OCI-LY7 (cell line): ENCODE measurements at regions of chr20 and their contacts with region 1.

Region 1: DNA sequence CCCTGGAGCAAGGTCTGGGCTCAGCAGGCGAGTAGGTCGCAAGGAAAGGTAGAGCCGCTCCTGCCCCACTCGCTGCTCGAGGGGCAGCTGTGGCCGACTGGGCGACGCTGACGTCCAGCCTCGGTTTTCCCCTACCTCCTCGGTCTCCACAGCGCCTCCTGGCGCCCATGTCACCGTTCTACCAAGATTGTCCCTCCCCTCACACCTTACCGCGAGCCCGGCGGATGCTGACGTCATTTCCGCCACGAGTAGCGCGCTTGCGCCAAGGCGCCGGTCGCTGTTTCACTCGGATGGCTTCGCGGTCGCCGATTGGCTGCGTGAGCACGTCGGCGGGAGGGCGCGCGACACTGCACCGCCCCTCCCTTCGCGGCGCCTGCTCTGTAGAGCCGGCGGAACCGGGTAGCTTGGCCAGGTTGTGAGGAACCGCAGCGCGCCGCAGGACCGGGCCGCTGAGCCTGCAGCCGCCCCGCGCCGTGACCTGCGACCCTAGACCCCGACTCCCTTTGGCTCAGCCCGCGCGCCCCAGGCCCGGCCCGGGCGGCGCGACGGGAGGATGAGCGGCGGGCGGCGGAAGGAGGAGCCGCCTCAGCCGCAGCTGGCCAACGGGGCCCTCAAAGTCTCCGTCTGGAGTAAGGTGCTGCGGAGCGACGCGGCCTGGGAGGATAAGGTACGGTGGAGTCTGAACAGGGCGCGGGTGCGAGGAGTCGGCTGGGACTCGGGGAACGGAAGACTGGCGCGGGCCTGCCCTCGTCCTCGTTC is at the start of gene RAB5IF:
- DNase-seq: peak; percentile 99
- H3K4me3 ChIP-seq: peak within 1 kb of the TSS; percentile 99
- H3K27ac ChIP-seq: peak within 1 kb of the TSS; percentile 89
- H3K4me1 ChIP-seq: peaks cover 43% of the 10 kb centered on the region
- CTCF ChIP-seq: peak; percentile 85
- total RNA-seq, gene RAB5IF: 66.6 and 72.2 TPM in 2 replicates

Region 2: GRCh38 chr20:36460648-36461599 is 144.7 kb before region 1 on chr20:
- CTCF ChIA-PET with region 1: no interaction called
- POLR2A ChIA-PET with region 1: no interaction called
- intact Hi-C with region 1: loop called (anchors 5 kb)
- DNase-seq: peak; percentile 94
- H3K4me3 ChIP-seq: peak overlapping the region; percentile 62
- H3K27ac ChIP-seq: peak overlapping the region; percentile 50
- H3K4me1 ChIP-seq: peaks cover 41% of the 10 kb centered on the region
- CTCF ChIP-seq: no peak

Region 3: DNA sequence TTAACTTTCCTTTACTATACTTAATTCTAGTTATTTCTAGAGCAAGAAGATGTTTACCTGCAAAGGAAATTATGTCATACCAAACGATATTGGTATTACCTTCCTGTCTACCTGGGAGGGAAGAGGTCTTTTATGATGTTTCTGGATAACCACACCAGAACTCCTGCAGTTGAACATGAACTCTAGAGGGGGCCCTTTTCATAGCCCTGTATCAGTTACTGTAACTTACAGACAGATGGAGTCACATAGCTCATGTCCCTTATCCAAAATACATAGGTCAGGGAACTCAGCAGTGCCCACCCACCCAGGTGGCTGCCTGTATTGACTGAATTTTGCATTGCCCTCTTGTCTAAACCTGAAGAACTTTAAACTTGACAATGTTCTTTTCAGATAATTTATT is 99.3 kb before region 1 on chr20:
- CTCF ChIA-PET with region 1: no interaction called
- POLR2A ChIA-PET with region 1: no interaction called
- intact Hi-C with region 1: loop called (anchors 1 kb)
- DNase-seq: peak; percentile 50
- H3K4me3 ChIP-seq: no peak overlapping the region
- H3K27ac ChIP-seq: no peak overlapping the region
- H3K4me1 ChIP-seq: no peaks in the 10 kb centered on the region
- CTCF ChIP-seq: peak; percentile 81

Region 4: DNA sequence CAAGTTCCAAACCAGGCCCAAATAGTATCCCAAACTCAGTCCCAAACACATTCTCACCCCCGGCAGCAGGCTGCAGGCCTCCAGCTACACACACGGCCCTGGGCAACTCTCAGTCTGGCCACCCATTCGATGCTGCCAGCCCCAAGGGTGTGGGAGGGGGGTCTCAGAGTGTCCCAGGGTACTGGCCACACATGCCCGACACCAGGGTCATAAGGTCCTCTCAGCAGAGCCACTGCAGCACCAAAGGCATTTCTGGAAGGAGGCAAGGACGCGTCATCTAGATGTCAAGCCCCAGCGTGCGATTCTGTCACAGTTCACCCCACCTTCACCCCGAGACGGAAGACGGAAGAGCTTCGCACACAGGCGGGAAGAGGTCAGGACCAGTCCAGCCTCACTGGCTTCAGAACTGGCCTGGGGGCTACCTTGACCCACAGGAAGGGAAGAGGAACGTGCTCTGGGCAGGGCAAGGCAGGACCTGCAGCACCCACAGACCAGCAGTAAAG is 54.7 kb before region 1 on chr20:
- CTCF ChIA-PET with region 1: no interaction called
- POLR2A ChIA-PET with region 1: no interaction called
- intact Hi-C with region 1: loop called (anchors 2 kb)
- DNase-seq: no peak
- H3K4me3 ChIP-seq: no peak overlapping the region
- H3K27ac ChIP-seq: no peak overlapping the region
- H3K4me1 ChIP-seq: peaks cover 13% of the 10 kb centered on the region
- CTCF ChIP-seq: no peak

Region 5: GRCh38 chr20:36573103-36573794 is 32.3 kb before region 1 on chr20 and contains the start of gene TGIF2:
- CTCF ChIA-PET with region 1: interaction called, 4 read pairs
- POLR2A ChIA-PET with region 1: interaction called, 10 read pairs
- intact Hi-C with region 1: loop called (anchors 1 kb)
- DNase-seq: peak; percentile 95
- H3K4me3 ChIP-seq: peak within 1 kb of the TSS; percentile 88
- H3K27ac ChIP-seq: peak within 1 kb of the TSS; percentile 69
- H3K4me1 ChIP-seq: peaks cover 25% of the 10 kb centered on the region
- CTCF ChIP-seq: no peak
- total RNA-seq, gene TGIF2: 26.6 and 41.3 TPM in 2 replicates

Region 6: GRCh38 chr20:36591854-36592641 is 13.5 kb before region 1 on chr20:
- CTCF ChIA-PET with region 1: interaction called, 10 read pairs
- POLR2A ChIA-PET with region 1: interaction called, 22 read pairs
- intact Hi-C with region 1: no loop called
- DNase-seq: no peak
- H3K4me3 ChIP-seq: no peak overlapping the region
- H3K27ac ChIP-seq: no peak overlapping the region
- H3K4me1 ChIP-seq: peaks cover 55% of the 10 kb centered on the region
- CTCF ChIP-seq: peak; percentile 70

Region 7: DNA sequence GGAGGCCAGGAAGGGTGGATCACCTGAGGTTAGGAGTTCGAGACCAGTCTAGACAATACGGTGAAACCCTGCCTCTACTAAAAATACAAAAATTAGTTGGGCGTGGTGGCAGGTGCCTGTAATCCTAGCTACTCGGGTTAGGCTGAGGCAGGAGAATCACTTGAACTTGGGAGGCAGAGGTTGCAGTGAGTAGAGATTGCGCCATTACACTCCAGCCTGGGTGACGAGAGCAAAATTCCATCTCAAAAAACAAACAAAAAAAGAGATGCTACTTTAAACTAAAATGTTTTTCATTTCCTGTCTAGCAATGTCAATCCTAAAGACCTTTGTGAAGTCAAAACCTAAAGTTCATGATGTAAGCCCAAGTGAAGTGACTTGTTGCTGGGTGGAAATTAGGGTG is 155.1 kb after region 1 on chr20:
- CTCF ChIA-PET with region 1: no interaction called
- POLR2A ChIA-PET with region 1: interaction called, 10 read pairs
- intact Hi-C with region 1: no loop called
- DNase-seq: no peak
- H3K4me3 ChIP-seq: no peak overlapping the region
- H3K27ac ChIP-seq: no peak overlapping the region
- H3K4me1 ChIP-seq: peaks cover 36% of the 10 kb centered on the region
- CTCF ChIP-seq: no peak

Region 8: GRCh38 chr20:37243076-37243936 is 637.7 kb after region 1 on chr20:
- CTCF ChIA-PET with region 1: no interaction called
- POLR2A ChIA-PET with region 1: no interaction called
- intact Hi-C with region 1: no loop called
- DNase-seq: no peak
- H3K4me3 ChIP-seq: no peak overlapping the region
- H3K27ac ChIP-seq: no peak overlapping the region
- H3K4me1 ChIP-seq: no peaks in the 10 kb centered on the region
- CTCF ChIP-seq: peak; percentile 33; the same call in 1 of the 2 replicates